HepG2 (cell line): ENCODE measurements at regions of chr4 and their contacts with region 1.

Region 1: DNA sequence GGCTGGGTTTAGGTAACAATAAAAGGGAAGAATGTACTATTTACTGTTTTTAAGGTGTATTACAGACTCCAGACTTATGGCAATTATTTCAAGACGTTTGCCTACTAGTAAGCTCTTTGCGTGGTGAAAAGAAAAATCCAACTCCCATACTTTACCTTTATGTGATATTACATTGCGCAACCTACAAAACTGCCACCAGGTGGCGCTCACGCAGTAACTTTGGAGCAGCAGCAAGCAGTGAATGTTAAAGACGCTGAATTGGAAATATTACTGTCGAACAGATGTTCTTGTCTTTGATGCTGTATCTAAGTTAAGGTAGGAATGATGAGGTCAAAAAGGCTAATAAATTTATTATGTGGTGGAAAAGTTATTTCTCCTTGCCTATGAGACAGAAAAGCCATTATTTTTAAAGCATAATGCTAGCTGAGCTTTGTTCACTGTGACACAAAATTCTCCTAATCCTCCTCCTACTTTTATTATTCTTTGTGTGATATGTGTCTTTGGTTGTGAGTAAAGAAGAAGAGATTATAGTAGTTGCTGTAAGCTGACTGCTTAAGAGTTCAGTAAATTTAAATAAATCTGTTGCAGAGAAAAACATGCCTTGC is 1099.8 kb upstream of the TENM3 start:
- DNase-seq: peak; percentile 59
- ATAC-seq: peak; percentile 85
- H3K4me3 ChIP-seq: no peak overlapping the region
- H3K27ac ChIP-seq: no peak overlapping the region
- H3K4me1 ChIP-seq: no peaks in the 10 kb centered on the region
- H3K27me3 ChIP-seq: no peaks in the 10 kb centered on the region; a peak in 1 of 5 replicates
- CTCF ChIP-seq: peak; percentile 88
- EP300 ChIP-seq: no peak
- POLR2A ChIP-seq: no peak
- RAD21 ChIP-seq: peak; percentile 53; the same call in 1 of the 2 replicates

Region 2: DNA sequence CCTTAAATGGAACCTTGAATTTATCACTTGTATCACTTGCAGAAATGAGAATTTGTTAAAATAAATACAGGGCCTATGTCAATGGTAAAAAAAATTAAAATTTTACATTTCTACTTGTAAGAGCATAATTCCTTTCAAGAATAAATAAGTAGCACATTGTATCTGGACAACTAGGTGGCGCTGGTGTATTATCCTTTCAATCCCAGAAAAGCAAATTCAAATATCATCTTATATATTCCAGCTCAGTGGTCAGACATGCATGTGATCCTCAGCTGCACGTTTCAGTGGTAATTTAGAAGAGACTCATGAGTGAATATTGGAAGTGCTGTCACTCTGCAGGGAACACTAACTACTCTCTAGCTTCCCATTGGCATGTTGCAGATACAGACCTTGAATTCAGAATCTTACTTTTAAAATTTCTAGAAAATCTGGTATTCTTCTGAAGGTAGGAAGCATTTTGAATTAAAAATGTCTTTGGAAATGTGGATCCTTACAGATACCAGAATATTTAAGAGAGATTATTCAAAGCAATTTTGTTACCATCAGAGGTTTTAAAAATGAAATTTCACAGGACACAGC is 314.8 kb before region 1 on chr4:
- CTCF ChIA-PET with region 1: no interaction called
- POLR2A ChIA-PET with region 1: no interaction called
- in situ Hi-C with region 1: no loop called
- intact Hi-C with region 1: loop called (anchors 5 kb)
- DNase-seq: peak; percentile 25
- ATAC-seq: no peak
- H3K4me3 ChIP-seq: no peak overlapping the region
- H3K27ac ChIP-seq: no peak overlapping the region
- H3K4me1 ChIP-seq: peaks cover 9% of the 10 kb centered on the region; the same call in 1 of the 2 replicates
- H3K27me3 ChIP-seq: no peaks in the 10 kb centered on the region
- CTCF ChIP-seq: peak; percentile 43; the same call in 1 of the 2 replicates
- EP300 ChIP-seq: no peak
- POLR2A ChIP-seq: no peak
- RAD21 ChIP-seq: no peak

Region 3: DNA sequence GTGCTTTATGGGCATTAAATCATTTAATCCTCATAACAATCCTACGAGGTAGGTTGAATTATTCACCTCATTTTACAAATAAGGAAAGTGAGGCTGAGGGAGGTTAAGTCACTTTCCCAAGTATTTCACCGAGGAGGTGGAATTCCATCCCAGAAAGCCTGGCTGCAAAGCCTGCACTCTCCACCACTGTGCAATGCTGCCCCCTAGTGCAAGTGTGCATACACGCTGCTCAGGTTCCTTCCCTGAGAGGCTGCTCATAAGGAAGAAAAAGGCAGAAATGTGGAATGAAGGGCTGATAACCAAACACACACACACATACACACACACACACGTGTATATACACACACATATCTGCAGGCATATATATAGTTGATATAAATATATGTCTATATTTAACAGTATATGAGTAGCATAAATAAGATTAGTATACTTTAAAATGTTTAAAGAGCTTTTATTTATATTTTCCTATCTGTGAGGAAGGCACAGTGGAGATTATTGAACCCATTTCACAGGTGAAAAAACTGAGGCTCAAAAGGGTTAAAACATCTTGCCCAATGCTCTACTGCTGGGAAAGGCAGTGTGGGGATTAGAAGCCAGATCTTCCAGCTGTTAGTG is 385.3 kb after region 1 on chr4:
- CTCF ChIA-PET with region 1: interaction called, 31 read pairs
- POLR2A ChIA-PET with region 1: no interaction called
- in situ Hi-C with region 1: loop called (anchors 5 kb)
- intact Hi-C with region 1: no loop called
- DNase-seq: peak; percentile 56
- ATAC-seq: peak; percentile 97
- H3K4me3 ChIP-seq: no peak overlapping the region
- H3K27ac ChIP-seq: no peak overlapping the region
- H3K4me1 ChIP-seq: no peaks in the 10 kb centered on the region
- H3K27me3 ChIP-seq: 0 out of 5 replicates have a peak, but pooled peaks cover 1 to 2% of the 10 kb centered on the region in 2 experiments
- CTCF ChIP-seq: peak; percentile 92
- EP300 ChIP-seq: no peak
- POLR2A ChIP-seq: no peak
- RAD21 ChIP-seq: peak; percentile 83